ENCODE measurements at regions of chr1 and their contacts with region 1.

Region 1: DNA sequence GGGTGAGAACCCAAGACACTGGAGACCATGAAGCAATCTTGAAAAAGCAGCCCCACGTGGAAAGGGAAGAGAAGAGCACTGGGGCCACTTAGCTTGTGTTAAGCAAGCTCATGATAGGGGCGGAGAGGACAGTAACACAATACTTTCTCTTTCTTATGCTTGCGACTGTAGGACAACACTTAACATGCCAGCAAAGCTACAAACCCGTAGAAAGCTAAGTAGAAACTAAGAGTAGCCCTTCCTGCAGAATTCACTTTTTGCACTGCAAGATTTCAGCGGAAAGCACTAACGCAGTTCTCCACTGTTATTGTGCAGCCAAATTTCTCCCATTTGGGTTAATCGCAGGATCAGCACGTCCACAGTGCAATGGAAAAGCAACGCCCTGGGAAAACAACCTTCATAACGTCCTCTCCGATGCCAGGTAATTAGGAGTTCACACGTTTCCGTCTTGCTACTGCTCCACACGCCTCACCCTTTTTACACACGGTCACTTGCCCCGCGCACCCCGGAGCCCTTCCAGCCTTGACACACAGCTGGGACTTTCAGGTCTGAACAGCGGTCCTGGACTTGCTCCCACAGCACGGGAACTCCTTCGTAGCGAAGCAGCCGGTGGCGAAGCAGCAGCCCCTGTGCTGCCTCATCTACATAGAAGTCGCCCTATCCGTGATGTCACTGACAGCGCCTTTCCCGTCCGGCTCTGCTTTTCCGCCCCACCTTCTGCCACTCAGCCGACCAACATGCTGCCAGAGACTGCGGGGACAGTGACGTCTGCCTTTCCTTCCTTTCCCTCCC is 148.6 kb downstream of the PPIAL4G start:
- DNase-seq: peak; percentile 91
- ATAC-seq: peak; percentile 87
- H3K4me3 Mint-ChIP-seq: peak overlapping the region; percentile 85
- H3K27ac Mint-ChIP-seq: peak overlapping the region; percentile 100
- H3K4me1 Mint-ChIP-seq: peaks cover 32% of the 10 kb centered on the region
- H3K27me3 Mint-ChIP-seq: no peaks in the 10 kb centered on the region

Region 2: GRCh38 chr1:147413110-147413605 is 921.4 kb before region 1 on chr1:
- CTCF ChIA-PET with region 1: no interaction called
- POLR2A ChIA-PET with region 1: no interaction called
- intact Hi-C with region 1: no loop called
- DNase-seq: no peak
- ATAC-seq: no peak
- H3K4me3 Mint-ChIP-seq: no peak overlapping the region
- H3K27ac Mint-ChIP-seq: no peak overlapping the region
- H3K4me1 Mint-ChIP-seq: no peaks in the 10 kb centered on the region
- H3K27me3 Mint-ChIP-seq: peaks cover 16% of the 10 kb centered on the region

Region 3: DNA sequence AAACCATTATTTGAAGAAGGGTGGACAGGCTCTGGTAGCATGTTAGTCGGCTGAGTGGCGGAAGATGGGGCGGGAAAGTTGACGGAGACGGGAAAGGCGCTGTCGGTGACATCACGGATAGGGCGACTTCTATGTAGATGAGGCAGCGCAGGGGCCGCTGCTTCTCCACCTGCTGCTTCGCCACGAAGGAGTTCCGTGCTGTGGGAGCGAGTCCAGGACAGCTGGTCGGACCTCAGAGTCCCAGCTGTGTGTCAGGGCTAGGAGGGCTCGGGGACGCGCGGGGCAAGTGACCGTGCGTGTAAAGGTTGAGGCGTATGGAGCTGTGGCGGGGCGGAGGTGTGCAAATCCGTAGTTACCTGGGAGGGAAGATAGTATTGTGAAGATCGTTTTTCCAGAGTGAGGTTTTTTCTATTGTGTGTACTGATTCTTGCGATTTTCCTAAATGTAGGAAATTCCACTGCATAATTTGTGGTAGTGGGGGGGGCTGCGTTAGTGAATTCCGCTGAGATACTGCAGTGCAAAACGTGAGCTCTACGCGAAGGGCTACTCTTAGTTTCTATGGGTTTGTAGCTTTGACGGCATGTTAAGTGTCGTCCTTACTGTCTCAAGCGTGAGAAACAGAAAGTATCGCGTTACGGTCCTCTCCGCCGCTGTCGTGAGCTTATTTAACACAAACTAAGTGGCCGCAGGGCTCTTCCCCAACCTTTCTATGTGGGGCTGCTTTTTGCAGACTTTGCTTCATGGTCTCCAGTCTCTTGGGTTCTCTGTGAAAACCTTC is 71.2 kb before region 1 on chr1:
- CTCF ChIA-PET with region 1: interaction called, 5 read pairs
- POLR2A ChIA-PET with region 1: interaction called, 289 read pairs
- intact Hi-C with region 1: loop called (anchors 1 to 2 kb)
- DNase-seq: peak; percentile 83
- ATAC-seq: peak; percentile 93
- H3K4me3 Mint-ChIP-seq: peak overlapping the region; percentile 75
- H3K27ac Mint-ChIP-seq: peak overlapping the region; percentile 99
- H3K4me1 Mint-ChIP-seq: peaks cover 21% of the 10 kb centered on the region
- H3K27me3 Mint-ChIP-seq: no peaks in the 10 kb centered on the region

Region 4: DNA sequence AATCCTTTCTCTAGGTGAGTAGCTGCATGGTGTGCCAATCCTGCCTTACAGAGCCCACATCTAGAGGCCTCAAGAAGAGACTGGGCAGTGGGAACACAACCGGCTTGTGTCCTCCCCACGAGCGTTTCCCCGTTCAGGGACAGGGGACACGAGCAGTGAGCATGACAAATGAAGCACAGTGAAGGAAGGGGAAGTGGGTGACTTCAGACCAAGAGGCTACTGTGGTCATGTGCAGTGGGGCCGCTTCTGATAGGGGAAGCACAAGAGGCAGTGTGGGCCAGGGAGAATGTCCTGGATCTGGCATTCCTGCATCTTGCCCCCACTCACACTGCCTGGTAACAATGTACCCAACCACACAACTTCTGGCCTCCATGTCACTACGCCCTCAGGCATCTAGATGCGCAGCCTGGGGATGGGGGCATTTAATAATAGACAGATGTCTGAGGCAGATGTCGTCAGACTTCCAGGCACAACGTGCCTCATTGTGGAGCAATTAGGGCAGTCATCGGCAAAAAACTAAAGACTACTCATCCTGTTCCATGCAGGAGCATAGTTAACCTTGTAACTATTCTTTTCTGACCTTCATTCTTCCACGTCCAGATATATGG is 26.8 kb before region 1 on chr1:
- CTCF ChIA-PET with region 1: no interaction called
- POLR2A ChIA-PET with region 1: interaction called, 22 read pairs
- intact Hi-C with region 1: no loop called
- DNase-seq: no peak
- ATAC-seq: no peak
- H3K4me3 Mint-ChIP-seq: no peak overlapping the region
- H3K27ac Mint-ChIP-seq: no peak overlapping the region
- H3K4me1 Mint-ChIP-seq: peaks cover 19% of the 10 kb centered on the region
- H3K27me3 Mint-ChIP-seq: peaks cover 50% of the 10 kb centered on the region

Region 5: GRCh38 chr1:148353461-148354283 is 19.1 kb after region 1 on chr1:
- CTCF ChIA-PET with region 1: interaction called, 7 read pairs
- POLR2A ChIA-PET with region 1: interaction called, 10 read pairs
- intact Hi-C with region 1: loop called in 1 of 2 experiments (anchors 2 kb)
- DNase-seq: peak; percentile 55
- ATAC-seq: peak; percentile 84
- H3K4me3 Mint-ChIP-seq: peak overlapping the region; percentile 38
- H3K27ac Mint-ChIP-seq: no peak overlapping the region
- H3K4me1 Mint-ChIP-seq: peaks cover 4% of the 10 kb centered on the region
- H3K27me3 Mint-ChIP-seq: peaks cover 23% of the 10 kb centered on the region

Region 6: DNA sequence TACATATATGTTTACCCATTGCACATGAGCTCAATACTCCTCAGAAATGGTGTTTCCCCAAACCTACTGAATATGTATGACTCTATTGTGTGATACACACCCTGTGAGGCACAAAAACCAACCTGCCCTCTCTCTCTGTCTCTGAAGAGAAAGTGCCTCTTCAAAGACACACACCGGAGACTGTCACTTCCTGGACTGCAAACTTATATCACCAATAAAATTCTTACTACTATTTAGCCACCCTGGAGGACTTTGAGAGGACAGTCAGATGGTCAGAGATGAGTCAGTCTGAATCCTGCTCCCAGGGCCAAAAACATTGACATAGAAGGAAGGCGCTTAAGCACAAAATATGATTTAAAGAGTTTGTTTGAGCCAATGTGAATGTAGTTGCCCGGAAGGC is 38.2 kb after region 1 on chr1:
- CTCF ChIA-PET with region 1: interaction called, 4 read pairs
- POLR2A ChIA-PET with region 1: interaction called, 22 read pairs
- intact Hi-C with region 1: no loop called
- DNase-seq: peak; percentile 72
- ATAC-seq: peak; percentile 77
- H3K4me3 Mint-ChIP-seq: peak overlapping the region; percentile 53
- H3K27ac Mint-ChIP-seq: peak overlapping the region; percentile 99
- H3K4me1 Mint-ChIP-seq: peaks cover 48% of the 10 kb centered on the region
- H3K27me3 Mint-ChIP-seq: no peaks in the 10 kb centered on the region

Measured in activated CD4-positive, alpha-beta T cell treated with anti-CD3 and anti-CD28 coated beads for 36 hours (primary cell).